Mammary epithelial cell (primary cell): ENCODE measurements at regions of chr3 and their contacts with region 1.

Region 1: DNA sequence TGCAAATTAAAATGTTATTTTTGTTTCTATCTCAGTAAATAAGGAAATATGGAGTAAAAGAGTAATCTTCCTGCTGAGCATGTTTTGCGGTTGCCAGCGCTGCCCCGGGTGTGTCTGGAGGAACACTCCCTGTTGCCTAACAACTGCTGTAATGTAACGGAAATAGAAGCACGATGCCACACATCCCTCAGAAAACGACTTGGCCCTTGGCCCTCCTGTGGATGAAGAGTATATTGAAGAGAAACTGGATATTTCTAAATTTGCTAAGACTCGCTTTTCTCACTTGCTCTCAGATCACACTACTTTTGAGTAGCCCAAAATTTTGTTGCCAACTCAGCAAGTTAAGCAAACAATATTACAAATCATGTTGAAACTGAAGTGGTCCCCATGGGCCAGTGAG is 18.9 kb downstream of the CX3CR1 start:
- DNase-seq: peak; percentile 89
- H3K4me3 ChIP-seq: no peak overlapping the region
- H3K27ac ChIP-seq: peak overlapping the region; percentile 70
- H3K4me1 ChIP-seq: peaks cover 6% of the 10 kb centered on the region
- H3K27me3 ChIP-seq: no peaks in the 10 kb centered on the region
- CTCF ChIP-seq: peak; percentile 43 to 62

Region 2: DNA sequence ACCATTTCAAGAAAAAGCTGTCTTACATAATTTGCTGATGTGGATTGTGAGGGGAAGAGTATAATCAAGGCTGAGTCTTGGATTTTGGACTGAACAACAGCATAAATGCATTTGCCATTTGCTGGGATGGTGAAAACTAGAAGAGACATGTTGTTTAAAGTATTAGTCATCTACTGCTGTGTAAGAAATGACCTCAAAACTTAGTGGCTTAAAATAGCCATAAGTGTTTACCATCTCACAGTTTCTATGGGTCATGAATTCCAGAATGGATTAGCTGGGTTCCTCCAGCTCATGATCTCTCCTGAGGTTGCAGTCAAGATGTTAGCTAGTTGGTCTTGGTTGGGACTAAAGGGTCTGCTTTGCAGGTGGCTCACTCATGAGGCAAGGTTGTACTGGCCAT is 275.4 kb before region 1 on chr3:
- CTCF ChIA-PET with region 1: no interaction called
- dilution Hi-C with region 1: no loop called
- in situ Hi-C with region 1: no loop called
- intact Hi-C with region 1: no loop called
- DNase-seq: peak; percentile 85
- H3K4me3 ChIP-seq: no peak overlapping the region
- H3K27ac ChIP-seq: no peak overlapping the region
- H3K4me1 ChIP-seq: peaks cover 14% of the 10 kb centered on the region
- H3K27me3 ChIP-seq: no peaks in the 10 kb centered on the region
- CTCF ChIP-seq: no peak

Region 3: GRCh38 chr3:39107388-39108199 is 153.4 kb before region 1 on chr3 and contains the starts of genes GORASP1 and TTC21A:
- CTCF ChIA-PET with region 1: no interaction called
- dilution Hi-C with region 1: no loop called
- in situ Hi-C with region 1: loop called in 1 of 2 experiments (anchors 25 kb)
- intact Hi-C with region 1: no loop called
- DNase-seq: peak; percentile 81
- H3K4me3 ChIP-seq: peak within 1 kb of the TSS; percentile 72 to 95 (median 91)
- H3K27ac ChIP-seq: peak within 1 kb of the TSS; percentile 86
- H3K4me1 ChIP-seq: peaks cover 27% of the 10 kb centered on the region
- H3K27me3 ChIP-seq: no peaks in the 10 kb centered on the region
- CTCF ChIP-seq: no peak
- total RNA-seq, gene GORASP1: 47.0 to 51.3 TPM
- total RNA-seq, gene TTC21A: 5.2 to 5.7 TPM

Region 4: DNA sequence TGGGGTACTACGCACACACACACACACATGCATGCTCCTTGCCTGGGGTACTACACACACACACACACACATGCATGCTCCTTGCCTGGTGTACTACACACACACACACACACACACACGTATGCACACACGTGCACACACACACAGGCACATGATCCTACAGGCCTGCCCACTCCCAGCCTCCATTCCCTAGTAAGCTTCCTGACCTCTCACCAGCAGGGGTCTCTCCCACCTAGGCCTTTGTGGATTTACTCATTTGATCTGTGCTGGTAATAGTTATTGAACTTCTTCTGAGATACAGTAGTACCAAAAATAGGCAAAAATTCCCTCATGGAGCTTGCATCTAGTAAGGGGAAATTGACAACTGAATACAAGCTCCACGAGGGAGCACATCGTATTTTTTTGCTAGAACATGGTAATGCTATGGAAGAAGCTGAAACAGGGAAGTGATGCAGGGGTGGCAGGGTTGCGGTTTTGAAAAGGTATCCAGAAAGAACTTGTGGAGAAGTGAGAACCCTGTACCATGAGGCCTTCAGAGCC is 134.4 kb before region 1 on chr3:
- CTCF ChIA-PET with region 1: no interaction called
- dilution Hi-C with region 1: no loop called
- in situ Hi-C with region 1: loop called in 1 of 2 experiments (anchors 25 kb)
- intact Hi-C with region 1: loop called (anchors 1 kb)
- DNase-seq: peak; percentile 24
- H3K4me3 ChIP-seq: no peak overlapping the region
- H3K27ac ChIP-seq: no peak overlapping the region
- H3K4me1 ChIP-seq: peaks cover 14% of the 10 kb centered on the region
- H3K27me3 ChIP-seq: no peaks in the 10 kb centered on the region
- CTCF ChIP-seq: peak; percentile 28 to 67

Region 5: GRCh38 chr3:39150799-39151631 is 109.9 kb before region 1 on chr3:
- CTCF ChIA-PET with region 1: no interaction called
- dilution Hi-C with region 1: no loop called
- in situ Hi-C with region 1: no loop called
- intact Hi-C with region 1: loop called (anchors 1 kb)
- DNase-seq: peak; percentile 82
- H3K4me3 ChIP-seq: peak overlapping the region; percentile 8 to 89 (median 74)
- H3K27ac ChIP-seq: peak overlapping the region; percentile 88
- H3K4me1 ChIP-seq: peaks cover 67% of the 10 kb centered on the region
- H3K27me3 ChIP-seq: no peaks in the 10 kb centered on the region
- CTCF ChIP-seq: no peak

Region 6: DNA sequence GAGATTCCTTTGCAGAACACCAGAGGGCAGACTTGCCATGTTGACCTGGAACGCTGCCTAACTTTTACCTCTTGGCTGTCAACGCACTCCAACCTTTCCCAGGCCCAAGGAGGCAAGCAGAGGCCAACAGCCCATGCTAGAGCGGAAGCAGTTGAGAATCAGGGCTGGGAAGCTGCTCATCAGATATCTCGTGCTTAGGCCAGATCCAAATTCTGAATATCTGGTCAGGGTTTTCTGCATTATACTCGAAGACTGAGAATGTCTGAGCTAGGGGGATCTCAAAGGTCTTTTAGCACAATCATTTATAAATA is 71.0 kb before region 1 on chr3:
- CTCF ChIA-PET with region 1: no interaction called
- dilution Hi-C with region 1: no loop called
- in situ Hi-C with region 1: no loop called
- intact Hi-C with region 1: loop called (anchors 1 kb)
- DNase-seq: peak; percentile 58
- H3K4me3 ChIP-seq: no peak overlapping the region
- H3K27ac ChIP-seq: no peak overlapping the region
- H3K4me1 ChIP-seq: no peaks in the 10 kb centered on the region
- H3K27me3 ChIP-seq: no peaks in the 10 kb centered on the region
- CTCF ChIP-seq: peak; percentile 69 to 81

Region 7: DNA sequence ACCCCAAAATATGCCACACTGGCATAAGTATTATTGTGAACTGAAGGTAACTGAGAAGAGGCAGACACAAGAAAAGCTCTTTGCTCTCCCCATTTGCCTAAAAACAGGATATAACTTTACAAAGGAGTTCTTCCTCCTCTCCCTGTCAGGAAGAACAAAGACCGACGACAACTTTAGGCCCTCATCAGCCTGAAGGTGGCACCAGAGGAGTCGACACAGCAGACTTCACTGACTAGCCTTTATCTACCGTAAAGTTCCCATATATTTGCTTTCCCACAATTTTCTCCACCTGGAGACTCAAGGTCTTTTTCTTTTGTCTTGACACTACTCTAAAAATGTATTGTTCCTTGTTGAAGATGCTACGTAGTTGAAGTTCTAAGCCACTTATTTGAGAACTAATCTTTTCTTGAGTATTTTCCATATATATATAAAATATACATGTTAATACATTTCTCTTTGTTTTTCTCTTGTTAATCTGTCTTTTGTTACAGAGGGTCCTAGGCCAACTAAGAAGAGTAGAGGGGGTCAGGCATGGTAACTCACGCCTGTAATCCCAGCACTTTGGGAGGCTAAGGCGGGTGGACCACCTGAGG is 52.4 kb before region 1 on chr3:
- CTCF ChIA-PET with region 1: no interaction called
- dilution Hi-C with region 1: no loop called
- in situ Hi-C with region 1: no loop called
- intact Hi-C with region 1: loop called (anchors 1 kb)
- DNase-seq: peak; percentile 50
- H3K4me3 ChIP-seq: no peak overlapping the region
- H3K27ac ChIP-seq: no peak overlapping the region
- H3K4me1 ChIP-seq: no peaks in the 10 kb centered on the region
- H3K27me3 ChIP-seq: peaks cover 3% of the 10 kb centered on the region
- CTCF ChIP-seq: peak; percentile 65 to 81